Mammary epithelial cell (primary cell): ENCODE measurements at regions of chr16 and their contacts with region 1.

Region 1: DNA sequence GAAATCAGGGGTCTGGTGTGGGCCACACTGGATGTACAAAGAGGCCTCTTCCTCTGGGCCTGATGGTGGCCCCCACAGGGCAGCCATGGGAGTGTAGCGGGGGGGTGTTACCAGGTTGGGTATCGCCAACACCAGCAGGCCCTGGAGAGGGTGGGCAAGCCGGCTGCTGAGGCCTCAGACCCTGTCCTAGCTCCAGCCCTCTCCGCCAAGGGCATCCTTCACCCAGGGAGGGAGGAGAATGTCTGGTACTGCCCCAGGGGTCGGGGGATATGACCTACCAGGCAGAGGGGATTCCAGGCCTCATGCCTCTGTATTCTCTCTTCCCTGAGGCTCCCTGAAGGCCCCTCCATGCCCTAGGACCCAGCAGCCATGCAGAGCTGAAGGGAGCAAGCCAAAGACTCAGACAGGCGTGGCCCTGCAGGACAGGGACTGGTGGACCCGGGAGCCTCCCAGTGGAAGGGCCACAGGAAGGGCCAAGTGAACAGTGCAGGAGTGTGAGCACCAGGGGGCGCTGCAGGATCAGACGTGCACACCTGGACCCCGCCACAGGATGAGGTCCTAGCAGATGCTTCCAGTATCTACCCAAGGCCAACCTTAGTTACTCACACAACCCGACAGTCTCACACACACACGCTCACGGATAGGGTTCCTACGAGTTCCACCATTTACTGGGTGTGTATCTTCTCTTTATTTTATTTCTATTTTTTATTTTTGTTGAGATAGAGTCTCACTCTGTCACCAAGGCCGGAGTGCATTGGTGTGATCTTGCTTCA is 10.9 kb upstream of the CES4A start:
- DNase-seq: peak; percentile 69
- H3K4me3 ChIP-seq: no peak overlapping the region
- H3K27ac ChIP-seq: no peak overlapping the region
- H3K4me1 ChIP-seq: peaks cover 10% of the 10 kb centered on the region
- H3K27me3 ChIP-seq: no peaks in the 10 kb centered on the region
- CTCF ChIP-seq: peak; percentile 91 to 98

Region 2: DNA sequence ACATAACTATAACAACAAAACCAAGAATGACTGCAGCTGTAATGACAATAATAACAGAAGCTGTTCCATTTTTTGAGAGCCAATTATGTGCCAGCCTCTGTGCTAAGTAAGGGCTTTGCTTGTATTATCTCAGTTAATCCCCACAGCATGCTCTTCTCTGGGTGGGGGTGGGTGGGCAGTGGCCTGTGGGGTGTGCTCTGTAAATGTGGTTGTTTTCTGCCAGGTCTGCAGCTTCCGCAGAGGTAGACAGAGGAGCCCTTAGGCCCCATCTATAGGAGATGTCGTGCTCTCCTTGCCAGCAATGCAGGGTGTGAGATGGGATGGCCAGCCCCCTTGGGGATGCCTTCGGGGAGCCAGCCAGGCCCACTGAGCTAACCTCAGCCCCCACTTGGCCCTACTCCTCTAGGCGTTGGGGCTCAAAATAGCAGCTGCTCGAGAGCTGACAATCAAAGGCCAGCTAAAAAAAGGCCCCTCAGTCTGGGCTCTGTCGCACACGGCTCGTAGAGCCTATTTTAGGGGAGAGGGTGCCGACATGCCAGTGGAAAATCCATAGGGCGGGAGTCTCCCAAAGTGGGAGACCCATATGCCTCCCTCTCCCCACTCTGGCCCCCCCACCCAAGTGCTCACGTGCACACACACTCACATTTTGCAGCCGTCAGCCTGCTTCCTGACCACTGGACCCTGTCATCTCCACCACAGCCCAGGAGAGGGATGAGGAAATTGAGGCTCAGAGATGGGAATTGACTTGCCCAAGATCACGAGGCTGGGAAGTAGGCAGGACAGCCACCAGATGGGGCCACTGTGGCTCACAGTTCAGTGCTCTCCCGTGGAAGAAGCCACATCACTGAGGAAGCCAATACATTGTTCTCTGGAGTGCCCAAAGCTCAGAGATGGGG is 74.6 kb before region 1 on chr16:
- CTCF ChIA-PET with region 1: no interaction called
- dilution Hi-C with region 1: no loop called
- in situ Hi-C with region 1: no loop called
- intact Hi-C with region 1: no loop called
- DNase-seq: no peak
- H3K4me3 ChIP-seq: no peak overlapping the region
- H3K27ac ChIP-seq: no peak overlapping the region
- H3K4me1 ChIP-seq: peaks cover 21% of the 10 kb centered on the region
- H3K27me3 ChIP-seq: no peaks in the 10 kb centered on the region
- CTCF ChIP-seq: peak in 1 of 2 donors; percentile 9

Region 3: DNA sequence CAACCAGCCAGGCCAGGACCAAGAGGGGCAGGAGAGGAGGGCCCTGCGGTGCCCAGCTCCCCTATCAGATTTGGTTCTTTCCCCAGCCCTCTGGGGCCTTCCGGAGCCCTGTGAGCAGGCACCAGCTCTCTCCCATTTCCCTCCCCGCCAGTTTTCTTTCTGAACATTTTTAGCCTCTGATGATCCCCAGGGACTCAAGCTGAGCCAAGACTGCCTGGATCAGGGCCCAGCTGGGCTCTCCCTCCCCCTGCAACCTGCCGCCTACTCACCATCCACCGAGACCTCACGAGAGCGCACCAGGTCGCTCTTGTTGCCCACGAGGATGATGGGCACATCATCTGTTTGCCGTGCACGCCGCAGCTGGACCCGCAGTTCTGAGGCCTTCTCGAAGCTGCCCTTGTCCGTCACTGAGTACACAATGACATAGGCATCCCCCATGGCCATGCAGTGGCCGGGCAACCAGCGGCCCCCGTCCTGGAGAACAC is 54.2 kb before region 1 on chr16:
- CTCF ChIA-PET with region 1: no interaction called
- dilution Hi-C with region 1: no loop called
- in situ Hi-C with region 1: no loop called
- intact Hi-C with region 1: no loop called
- DNase-seq: no peak
- H3K4me3 ChIP-seq: no peak overlapping the region
- H3K27ac ChIP-seq: no peak overlapping the region
- H3K4me1 ChIP-seq: peaks cover 49% of the 10 kb centered on the region
- H3K27me3 ChIP-seq: no peaks in the 10 kb centered on the region
- CTCF ChIP-seq: no peak

Region 4: DNA sequence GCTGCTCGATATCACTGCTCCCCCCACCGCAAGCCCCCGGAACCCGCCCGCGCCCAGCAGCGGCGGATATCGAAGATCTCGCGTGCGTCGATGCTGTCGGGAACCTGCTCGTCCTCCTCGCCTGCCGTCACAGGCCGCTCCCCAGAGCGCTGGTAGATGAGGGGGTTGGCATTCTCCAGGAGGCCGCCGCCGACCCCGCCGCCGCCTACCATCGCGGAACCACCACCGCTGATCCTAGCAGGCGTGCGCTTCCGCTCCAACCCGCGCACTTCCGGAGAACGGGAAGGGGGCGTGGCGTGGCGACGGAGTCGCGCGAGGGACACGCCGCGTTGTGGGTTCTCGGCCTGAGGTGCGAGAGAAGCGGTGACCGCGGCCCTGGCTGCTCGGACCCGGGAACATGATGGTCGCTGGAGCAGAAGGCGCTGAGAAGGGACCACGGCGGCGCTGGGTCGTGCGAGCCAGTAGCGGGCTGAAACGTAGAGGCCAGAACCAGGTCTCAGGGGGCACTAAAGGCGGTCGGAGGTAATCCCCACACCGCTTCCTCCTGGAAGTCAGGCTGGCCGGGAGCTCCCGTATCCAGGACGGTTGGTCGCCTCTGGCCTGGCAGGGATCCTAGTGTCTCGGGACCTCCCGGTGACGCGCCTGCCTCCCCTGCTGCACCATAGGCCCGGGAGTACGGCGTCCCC is 43.2 kb before region 1 on chr16 and contains the start of gene CIAO2B:
- CTCF ChIA-PET with region 1: no interaction called
- dilution Hi-C with region 1: loop called (anchors 5 kb)
- in situ Hi-C with region 1: no loop called
- intact Hi-C with region 1: no loop called
- DNase-seq: peak; percentile 81
- H3K4me3 ChIP-seq: peak within 1 kb of the TSS; percentile 66 to 94 (median 86)
- H3K27ac ChIP-seq: peak within 1 kb of the TSS; percentile 92
- H3K4me1 ChIP-seq: peaks cover 15% of the 10 kb centered on the region
- H3K27me3 ChIP-seq: no peaks in the 10 kb centered on the region
- CTCF ChIP-seq: no peak
- total RNA-seq, gene CIAO2B: 89.9 to 104 TPM

Region 5: DNA sequence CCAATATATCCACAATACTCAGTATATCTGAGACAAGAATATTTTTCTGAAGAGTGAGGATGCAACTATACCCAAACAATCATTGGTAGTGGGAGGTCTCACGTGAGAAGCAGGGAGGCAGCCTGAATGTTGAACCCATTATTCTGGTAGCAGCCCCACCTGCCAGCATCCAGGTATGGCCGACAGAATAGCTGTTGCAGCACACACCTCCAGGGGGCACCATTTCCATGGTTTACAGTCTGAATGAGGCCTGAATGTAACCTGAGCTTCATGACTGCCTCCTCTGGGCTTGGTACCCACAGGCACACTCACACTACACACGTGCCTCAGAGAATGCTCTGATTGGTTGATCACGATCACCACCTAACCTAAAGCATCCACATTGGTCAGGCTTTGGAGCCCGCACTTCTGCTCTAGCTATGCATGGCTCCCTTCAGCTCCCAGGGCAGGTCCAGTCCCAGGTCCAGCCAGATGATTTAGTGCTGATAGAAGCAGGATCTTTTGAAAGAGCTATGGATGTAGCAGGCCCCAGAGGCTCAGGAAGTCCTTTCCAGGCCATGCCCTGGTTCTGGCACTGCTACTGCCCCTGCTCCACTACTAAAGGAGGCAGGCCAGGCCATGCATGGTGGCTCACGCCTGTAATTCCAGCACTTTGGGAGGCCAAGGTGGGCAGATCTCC is 40.4 kb after region 1 on chr16:
- CTCF ChIA-PET with region 1: no interaction called
- dilution Hi-C with region 1: loop called (anchors 5 kb)
- in situ Hi-C with region 1: no loop called
- intact Hi-C with region 1: loop called (anchors 1 kb)
- DNase-seq: peak; percentile 91
- H3K4me3 ChIP-seq: no peak overlapping the region
- H3K27ac ChIP-seq: no peak overlapping the region
- H3K4me1 ChIP-seq: peaks cover 22% of the 10 kb centered on the region
- H3K27me3 ChIP-seq: no peaks in the 10 kb centered on the region
- CTCF ChIP-seq: peak; percentile 85 to 98

Region 6: DNA sequence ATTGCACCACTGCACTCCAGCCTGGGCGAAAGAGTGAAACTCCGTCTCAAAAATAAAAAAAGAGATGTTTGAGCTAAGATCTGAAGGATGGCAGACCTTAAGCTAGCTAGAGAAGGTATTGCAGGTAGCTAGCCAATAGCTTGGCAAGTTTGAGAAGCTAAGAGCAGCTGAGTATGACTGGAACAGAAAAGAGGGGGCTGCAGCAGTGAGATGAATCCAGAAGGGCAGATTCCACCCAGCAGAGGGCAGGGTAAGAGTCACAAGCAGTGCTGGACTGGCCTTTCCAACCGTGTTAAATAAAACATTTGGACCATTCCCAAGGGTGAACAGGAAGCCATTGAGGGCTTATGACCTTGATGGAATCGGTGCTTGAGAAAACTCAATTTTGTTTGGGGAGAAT is 126.5 kb after region 1 on chr16:
- CTCF ChIA-PET with region 1: no interaction called
- dilution Hi-C with region 1: no loop called
- in situ Hi-C with region 1: no loop called
- intact Hi-C with region 1: loop called (anchors 1 kb)
- DNase-seq: no peak
- H3K4me3 ChIP-seq: no peak overlapping the region
- H3K27ac ChIP-seq: no peak overlapping the region
- H3K4me1 ChIP-seq: peaks cover 5% of the 10 kb centered on the region
- H3K27me3 ChIP-seq: no peaks in the 10 kb centered on the region
- CTCF ChIP-seq: peak; percentile 34 to 40

Region 7: GRCh38 chr16:67159593-67160406 is 182.3 kb after region 1 on chr16 and contains the starts of genes FBXL8 and TRADD:
- CTCF ChIA-PET with region 1: interaction called, 5 read pairs
- dilution Hi-C with region 1: no loop called
- in situ Hi-C with region 1: loop called in 1 of 2 experiments (anchors 5 kb)
- intact Hi-C with region 1: loop called (anchors 1 kb)
- DNase-seq: peak; percentile 73
- H3K4me3 ChIP-seq: peak within 1 kb of the TSS; percentile 64 to 99 (median 72)
- H3K27ac ChIP-seq: peak within 1 kb of the TSS; percentile 40
- H3K4me1 ChIP-seq: peaks cover 15% of the 10 kb centered on the region
- H3K27me3 ChIP-seq: no peaks in the 10 kb centered on the region
- CTCF ChIP-seq: peak; percentile 4 to 54
- total RNA-seq, gene FBXL8: 12.0 to 14.6 TPM
- total RNA-seq, gene TRADD: 17.8 to 18.6 TPM

Region 8: GRCh38 chr16:67294938-67295361 is 317.4 kb after region 1 on chr16:
- CTCF ChIA-PET with region 1: no interaction called
- dilution Hi-C with region 1: loop called (anchors 5 kb)
- in situ Hi-C with region 1: no loop called
- intact Hi-C with region 1: no loop called
- DNase-seq: no peak
- H3K4me3 ChIP-seq: no peak overlapping the region
- H3K27ac ChIP-seq: no peak overlapping the region
- H3K4me1 ChIP-seq: no peaks in the 10 kb centered on the region
- H3K27me3 ChIP-seq: peaks cover 11% of the 10 kb centered on the region
- CTCF ChIP-seq: no peak